ENCODE measurements at regions of chr14 and their contacts with region 1.

Region 1: GRCh38 chr14:93994919-93995682 is 2.0 kb upstream of the CCDC197 start:
- DNase-seq: no peak
- H3K4me3 Mint-ChIP-seq: no peak overlapping the region
- H3K27ac Mint-ChIP-seq: peak overlapping the region; percentile 51
- H3K4me1 Mint-ChIP-seq: peaks cover 39% of the 10 kb centered on the region
- H3K27me3 Mint-ChIP-seq: no peaks in the 10 kb centered on the region

Region 2: GRCh38 chr14:94009767-94010166 is 14.7 kb after region 1 on chr14:
- intact Hi-C with region 1: loop called (anchors 2 kb)
- DNase-seq: no peak
- H3K4me3 Mint-ChIP-seq: no peak overlapping the region
- H3K27ac Mint-ChIP-seq: peak overlapping the region; percentile 65
- H3K4me1 Mint-ChIP-seq: peaks cover 39% of the 10 kb centered on the region
- H3K27me3 Mint-ChIP-seq: no peaks in the 10 kb centered on the region

Region 3: DNA sequence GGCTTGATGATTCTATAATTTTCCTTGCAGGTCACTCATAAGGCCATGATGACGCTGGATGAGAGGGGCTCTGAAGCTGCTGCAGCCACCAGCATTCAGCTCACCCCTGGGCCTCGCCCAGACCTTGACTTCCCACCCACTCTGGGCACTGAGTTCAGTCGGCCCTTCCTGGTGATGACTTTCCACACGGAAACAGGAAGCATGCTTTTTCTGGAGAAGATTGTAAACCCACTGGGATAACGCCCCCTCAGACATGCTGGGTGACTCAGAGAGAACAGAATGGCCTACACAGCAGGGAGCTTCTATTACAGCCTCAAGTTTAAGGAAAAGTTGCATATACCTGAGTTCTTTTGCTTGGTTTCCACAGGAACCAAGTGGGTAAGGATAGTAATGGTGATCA is 651.4 kb after region 1 on chr14:
- intact Hi-C with region 1: no loop called
- DNase-seq: no peak
- H3K4me3 Mint-ChIP-seq: no peak overlapping the region
- H3K27ac Mint-ChIP-seq: no peak overlapping the region
- H3K4me1 Mint-ChIP-seq: no peaks in the 10 kb centered on the region
- H3K27me3 Mint-ChIP-seq: no peaks in the 10 kb centered on the region

Measured in activated T-helper 2 cell treated with anti-CD3 and anti-CD28 coated beads, Interferon-gamma antibody, Interleukin-2, Interleukin-4, amounts not matched to agents 10 μg/mL and 5 μg/mL and 100 μg/mL, durations not matched to agents 14 hours and 24 hours and 36 hours (primary cell).